CD14-positive monocyte (primary cell): ENCODE measurements at regions of chr16 and their contacts with region 1.

Region 1: GRCh38 chr16:9134739-9135138 is 43.3 kb downstream of the HAPSTR1 start:
- DNase-seq: peak; percentile 35 to 69 (median 58)
- H3K4me3 ChIP-seq: no peak overlapping the region
- H3K4me3 Mint-ChIP-seq: no peak overlapping the region
- H3K27ac ChIP-seq: no peak overlapping the region
- H3K27ac Mint-ChIP-seq: peak overlapping the region in 1 of 7 donors; percentile 75
- H3K4me1 ChIP-seq: peaks cover 4% of the 10 kb centered on the region in 2 donors
- H3K4me1 Mint-ChIP-seq: peaks cover 12% of the 10 kb centered on the region
- H3K27me3 ChIP-seq: peaks cover 0 to 9% of the 10 kb centered on the region in 2 donors
- H3K27me3 Mint-ChIP-seq: peaks cover 23 to 28% (median 24%) of the 10 kb centered on the region in 3 donors
- CTCF ChIP-seq: peak; percentile 83

Region 2: GRCh38 chr16:8905168-8905762 is 229.5 kb before region 1 on chr16:
- intact Hi-C with region 1: loop called in 1 of 2 experiments (anchors 10 kb)
- DNase-seq: no peak
- H3K4me3 ChIP-seq: no peak overlapping the region
- H3K4me3 Mint-ChIP-seq: no peak overlapping the region
- H3K27ac ChIP-seq: no peak overlapping the region
- H3K27ac Mint-ChIP-seq: peak overlapping the region in 1 of 7 donors; percentile 21
- H3K4me1 ChIP-seq: peaks cover 22 to 25% of the 10 kb centered on the region in 2 donors
- H3K4me1 Mint-ChIP-seq: peaks cover 23% of the 10 kb centered on the region
- H3K27me3 ChIP-seq: no peaks in the 10 kb centered on the region
- H3K27me3 Mint-ChIP-seq: no peaks in the 10 kb centered on the region
- CTCF ChIP-seq: peak; percentile 28

Region 3: DNA sequence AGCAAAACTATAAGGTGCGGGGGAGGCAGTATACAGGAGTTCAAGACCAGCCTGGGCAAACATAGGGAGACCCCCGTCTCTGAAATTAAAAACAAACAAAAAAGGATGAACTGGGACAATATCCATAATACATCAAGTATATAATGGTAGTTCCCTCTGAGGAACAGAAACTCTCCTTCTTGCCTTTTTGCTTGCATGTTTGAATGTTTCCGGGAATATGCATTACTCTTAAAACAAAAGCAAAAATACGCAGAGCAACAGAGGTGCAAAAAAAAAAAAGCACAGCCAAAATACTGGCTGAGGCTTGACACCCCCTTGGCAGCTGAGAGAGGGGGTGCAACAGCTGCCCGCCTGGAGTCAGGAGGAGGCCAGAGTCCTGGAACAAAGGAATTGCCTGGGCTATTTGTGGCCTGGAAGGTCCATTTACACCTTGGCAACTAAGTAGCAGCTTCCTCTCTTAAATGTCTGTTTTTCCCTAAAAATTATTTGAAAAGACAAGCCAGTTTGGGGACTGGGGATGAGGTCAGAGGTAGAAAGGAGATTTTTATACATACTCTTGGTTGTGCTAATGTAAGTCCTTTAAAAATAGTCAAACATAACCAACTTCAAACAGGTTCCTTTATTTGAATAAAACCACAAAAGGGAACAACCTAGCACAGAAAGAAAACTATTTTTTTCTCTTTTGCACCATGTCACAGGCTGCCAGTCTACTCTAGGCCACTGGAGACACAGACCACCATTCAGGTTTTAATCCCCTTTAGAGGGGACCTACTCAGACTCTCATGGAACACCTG is 190.6 kb before region 1 on chr16:
- intact Hi-C with region 1: loop called in 1 of 2 experiments (anchors 10 kb)
- DNase-seq: peak; percentile 17 to 58 (median 27)
- H3K4me3 ChIP-seq: peak overlapping the region in 2 of 3 experiments; percentile 12 to 64
- H3K4me3 Mint-ChIP-seq: peak overlapping the region; percentile 69 to 85
- H3K27ac ChIP-seq: peak overlapping the region; percentile 55 to 56
- H3K27ac Mint-ChIP-seq: peak overlapping the region; percentile 80 to 90 (median 88)
- H3K4me1 ChIP-seq: peaks cover 48 to 76% of the 10 kb centered on the region in 2 donors
- H3K4me1 Mint-ChIP-seq: peaks cover 88% of the 10 kb centered on the region
- H3K27me3 ChIP-seq: no peaks in the 10 kb centered on the region
- H3K27me3 Mint-ChIP-seq: no peaks in the 10 kb centered on the region
- CTCF ChIP-seq: no peak

Region 4: GRCh38 chr16:9225611-9226316 is 91.0 kb after region 1 on chr16:
- intact Hi-C with region 1: no loop called
- DNase-seq: no peak
- H3K4me3 ChIP-seq: no peak overlapping the region
- H3K4me3 Mint-ChIP-seq: no peak overlapping the region
- H3K27ac ChIP-seq: no peak overlapping the region
- H3K27ac Mint-ChIP-seq: no peak overlapping the region
- H3K4me1 ChIP-seq: no peaks in the 10 kb centered on the region
- H3K4me1 Mint-ChIP-seq: no peaks in the 10 kb centered on the region
- H3K27me3 ChIP-seq: no peaks in the 10 kb centered on the region
- H3K27me3 Mint-ChIP-seq: peaks cover 4 to 6% (median 5%) of the 10 kb centered on the region in 3 donors
- CTCF ChIP-seq: no peak